Mammary epithelial cell (primary cell): ENCODE measurements at regions of chr9 and their contacts with region 1.

Region 1: DNA sequence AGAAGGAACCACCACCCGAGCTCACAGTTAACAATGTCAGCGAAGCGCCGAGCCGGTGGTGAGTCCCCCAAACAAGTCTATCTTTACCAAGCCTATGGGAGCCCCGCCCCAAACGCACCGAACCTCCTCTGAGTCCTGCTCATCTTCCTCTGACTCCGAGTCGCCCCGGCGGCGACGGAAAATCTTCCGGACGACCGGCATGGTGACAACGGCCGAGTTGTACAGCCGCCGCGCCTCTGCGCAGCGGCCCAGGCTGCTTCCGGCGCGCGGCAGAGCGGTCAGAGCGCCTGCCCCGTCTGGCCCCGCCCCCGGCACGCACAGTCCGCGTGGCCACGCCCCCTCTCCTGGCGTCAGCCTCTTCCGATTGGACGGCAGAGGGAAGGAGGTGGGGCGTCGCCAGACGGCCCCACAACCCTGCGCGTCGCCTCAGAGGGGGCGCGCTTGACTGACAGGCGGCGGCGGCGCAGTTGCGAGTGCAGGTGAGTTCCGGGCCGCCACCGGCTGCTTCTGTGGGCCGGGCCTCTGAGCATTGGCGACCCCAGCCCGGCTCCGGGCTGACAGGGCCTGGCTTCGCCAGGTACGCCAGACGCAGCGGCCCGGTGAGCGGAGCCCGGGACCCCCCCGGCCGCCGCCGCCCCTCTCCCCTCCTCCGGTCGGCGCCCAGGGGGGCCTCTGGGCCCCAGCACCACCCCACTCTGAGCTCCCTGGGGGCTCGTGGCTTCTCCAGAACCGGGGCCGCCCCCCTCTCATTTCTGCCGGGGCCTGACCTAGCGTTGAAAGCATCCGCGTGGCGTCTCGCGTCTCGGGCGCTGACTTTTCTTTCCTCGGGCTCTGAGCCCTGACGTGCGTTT is at the starts of genes C9orf78 and USP20:
- DNase-seq: peak; percentile 96
- H3K4me3 ChIP-seq: peak within 1 kb of the TSS; percentile 79 to 98 (median 87)
- H3K27ac ChIP-seq: peak within 1 kb of the TSS; percentile 64
- H3K4me1 ChIP-seq: peaks cover 13% of the 10 kb centered on the region
- H3K27me3 ChIP-seq: no peaks in the 10 kb centered on the region
- CTCF ChIP-seq: no peak
- total RNA-seq, gene C9orf78: 25.3 to 33.6 TPM
- total RNA-seq, gene USP20: 10.2 to 17.1 TPM

Region 2: GRCh38 chr9:129900263-129901027 is 65.2 kb after region 1 on chr9:
- CTCF ChIA-PET with region 1: no interaction called
- dilution Hi-C with region 1: loop called (anchors 5 kb)
- in situ Hi-C with region 1: no loop called
- intact Hi-C with region 1: no loop called
- DNase-seq: no peak
- H3K4me3 ChIP-seq: no peak overlapping the region
- H3K27ac ChIP-seq: no peak overlapping the region
- H3K4me1 ChIP-seq: no peaks in the 10 kb centered on the region
- H3K27me3 ChIP-seq: no peaks in the 10 kb centered on the region
- CTCF ChIP-seq: no peak

Region 3: DNA sequence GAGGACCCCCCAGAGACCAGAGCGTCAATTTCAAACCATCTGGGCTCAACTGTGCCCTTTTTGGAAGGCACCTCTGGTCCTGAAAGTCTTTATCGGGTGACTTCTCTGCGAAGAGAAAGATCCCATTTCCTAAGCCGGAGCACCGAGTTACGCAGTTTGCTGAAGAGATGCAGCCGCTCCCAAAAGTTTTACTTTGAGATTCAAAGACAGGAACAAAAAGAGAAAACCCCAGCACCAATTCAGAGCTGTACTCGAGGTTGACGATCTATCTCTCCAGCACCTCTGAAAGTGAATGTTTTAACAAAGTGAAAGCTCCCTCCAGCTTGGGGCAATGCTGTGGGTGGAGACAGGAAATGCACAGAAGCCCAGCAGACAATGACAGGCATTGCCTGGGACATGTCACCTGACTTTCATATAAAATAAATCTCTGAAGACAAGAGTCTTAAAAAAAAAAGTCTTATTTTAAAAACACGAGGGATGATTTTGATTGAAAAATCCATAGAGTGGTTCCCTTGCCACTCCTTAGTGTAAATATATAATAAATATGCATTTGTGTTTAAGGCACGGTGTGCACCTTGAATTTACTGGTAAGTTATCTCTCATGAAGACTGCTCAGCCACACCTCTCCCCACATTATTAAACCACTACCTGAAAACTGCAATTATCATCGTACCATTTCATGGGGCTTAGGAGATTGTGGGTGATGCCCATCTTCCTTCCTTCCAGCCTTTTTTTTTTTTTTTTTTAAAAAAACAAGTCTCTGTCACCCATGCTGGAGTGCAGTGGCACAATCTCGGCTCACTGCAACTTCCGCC is 127.8 kb after region 1 on chr9:
- CTCF ChIA-PET with region 1: no interaction called
- dilution Hi-C with region 1: no loop called
- in situ Hi-C with region 1: no loop called
- intact Hi-C with region 1: no loop called
- DNase-seq: peak; percentile 57
- H3K4me3 ChIP-seq: peak overlapping the region; percentile 53 to 81 (median 60)
- H3K27ac ChIP-seq: peak overlapping the region; percentile 74
- H3K4me1 ChIP-seq: peaks cover 11% of the 10 kb centered on the region
- H3K27me3 ChIP-seq: no peaks in the 10 kb centered on the region
- CTCF ChIP-seq: no peak

Region 4: GRCh38 chr9:130042833-130043653 is 207.8 kb after region 1 on chr9 and contains the start of gene FNBP1:
- CTCF ChIA-PET with region 1: no interaction called
- dilution Hi-C with region 1: no loop called
- in situ Hi-C with region 1: no loop called
- intact Hi-C with region 1: loop called (anchors 5 kb)
- DNase-seq: peak; percentile 69
- H3K4me3 ChIP-seq: peak within 1 kb of the TSS; percentile 79 to 88 (median 86)
- H3K27ac ChIP-seq: peak within 1 kb of the TSS; percentile 34
- H3K4me1 ChIP-seq: peaks cover 4% of the 10 kb centered on the region
- H3K27me3 ChIP-seq: no peaks in the 10 kb centered on the region
- CTCF ChIP-seq: peak in 1 of 2 donors; percentile 8
- total RNA-seq, gene FNBP1: 11.5 to 21.5 TPM

Region 5: DNA sequence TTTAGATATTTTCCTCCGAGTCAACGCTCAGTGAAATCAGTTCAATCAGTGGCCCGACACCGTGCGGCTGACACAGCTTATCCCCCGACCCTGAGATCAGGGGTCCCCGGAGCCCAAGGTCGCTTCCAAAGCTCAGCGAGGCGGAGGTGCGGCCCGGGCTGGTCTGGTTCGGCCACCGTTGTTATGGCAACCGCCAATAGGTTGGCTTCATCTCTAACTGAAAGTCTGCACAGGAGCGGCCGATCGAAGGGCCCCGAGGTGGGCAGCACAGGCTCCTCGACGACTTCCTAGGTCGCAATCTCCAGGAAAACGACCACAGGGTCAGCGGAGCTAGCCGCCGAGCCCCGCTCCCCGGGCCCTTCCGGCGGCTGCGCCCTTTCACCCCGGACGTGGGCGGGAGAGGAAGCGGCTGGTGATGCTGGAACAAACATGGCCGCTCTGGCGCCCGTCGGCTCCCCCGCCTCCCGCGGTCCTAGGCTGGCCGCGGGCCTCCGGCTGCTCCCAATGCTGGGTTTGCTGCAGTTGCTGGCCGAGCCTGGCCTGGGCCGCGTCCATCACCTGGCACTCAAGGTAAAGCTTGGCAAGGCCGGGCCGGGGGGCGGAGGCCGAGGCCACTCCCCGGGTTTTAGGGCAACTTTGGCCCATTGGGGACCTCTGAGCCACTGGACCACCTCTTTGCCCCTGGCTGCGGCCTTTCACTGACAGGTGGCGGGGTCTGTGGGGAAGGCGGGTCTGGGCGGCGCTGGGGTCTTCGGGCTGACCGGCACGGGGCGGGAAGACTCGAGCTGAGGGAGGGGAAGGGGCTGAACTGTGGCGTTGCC is 218.5 kb after region 1 on chr9 and contains the start of gene GPR107:
- CTCF ChIA-PET with region 1: no interaction called
- dilution Hi-C with region 1: loop called (anchors 5 kb)
- in situ Hi-C with region 1: no loop called
- intact Hi-C with region 1: no loop called
- DNase-seq: peak; percentile 68
- H3K4me3 ChIP-seq: peak within 1 kb of the TSS; percentile 71 to 89 (median 86)
- H3K27ac ChIP-seq: peak within 1 kb of the TSS; percentile 82
- H3K4me1 ChIP-seq: peaks cover 10% of the 10 kb centered on the region
- H3K27me3 ChIP-seq: no peaks in the 10 kb centered on the region
- CTCF ChIP-seq: no peak
- total RNA-seq, gene GPR107: 34.2 to 41.4 TPM

Region 6: GRCh38 chr9:130138171-130138653 is 303.0 kb after region 1 on chr9:
- CTCF ChIA-PET with region 1: no interaction called
- dilution Hi-C with region 1: no loop called
- in situ Hi-C with region 1: no loop called
- intact Hi-C with region 1: loop called (anchors 1 kb)
- DNase-seq: peak; percentile 97
- H3K4me3 ChIP-seq: no peak overlapping the region
- H3K27ac ChIP-seq: peak overlapping the region; percentile 51
- H3K4me1 ChIP-seq: peaks cover 32% of the 10 kb centered on the region
- H3K27me3 ChIP-seq: no peaks in the 10 kb centered on the region
- CTCF ChIP-seq: no peak